ENCODE measurements at regions of chr7 and their contacts with region 1.

Region 1: GRCh38 chr7:131546583-131547111 is 9.8 kb downstream of the PODXL start:
- DNase-seq: peak; percentile 89 to 92
- H3K4me3 ChIP-seq: no peak overlapping the region
- H3K27ac ChIP-seq: no peak overlapping the region
- H3K4me1 ChIP-seq: peaks cover 39 to 86% (median 55%) of the 10 kb centered on the region in 4 experiments
- H3K27me3 ChIP-seq: no peaks in the 10 kb centered on the region
- CTCF ChIP-seq: peak; percentile 98 to 99 (median 98)
- EP300 ChIP-seq: no peak
- POLR2A ChIP-seq: no peak; a peak in 1 of 3 replicates
- RAD21 ChIP-seq: peak; percentile 73 to 79

Region 2: GRCh38 chr7:131507592-131508331 is 38.9 kb before region 1 on chr7:
- CTCF ChIA-PET with region 1: interaction called, 73 read pairs
- POLR2A ChIA-PET with region 1: interaction called, 4 read pairs
- DNase-seq: peak in 1 of 2 experiments; percentile 76
- H3K4me3 ChIP-seq: no peak overlapping the region
- H3K27ac ChIP-seq: peak overlapping the region; percentile 50; the same call in 1 of the 2 replicates
- H3K4me1 ChIP-seq: peaks cover 0 to 7% (median 3%) of the 10 kb centered on the region in 4 experiments; a peak in 4 of 7 replicates
- H3K27me3 ChIP-seq: no peaks in the 10 kb centered on the region
- CTCF ChIP-seq: peak; percentile 50 to 61 (median 60); a peak in 3 of 4 replicates
- EP300 ChIP-seq: no peak
- POLR2A ChIP-seq: peak; percentile 13 to 38; a peak in 2 of 3 replicates
- RAD21 ChIP-seq: peak; percentile 56 to 59

Region 3: DNA sequence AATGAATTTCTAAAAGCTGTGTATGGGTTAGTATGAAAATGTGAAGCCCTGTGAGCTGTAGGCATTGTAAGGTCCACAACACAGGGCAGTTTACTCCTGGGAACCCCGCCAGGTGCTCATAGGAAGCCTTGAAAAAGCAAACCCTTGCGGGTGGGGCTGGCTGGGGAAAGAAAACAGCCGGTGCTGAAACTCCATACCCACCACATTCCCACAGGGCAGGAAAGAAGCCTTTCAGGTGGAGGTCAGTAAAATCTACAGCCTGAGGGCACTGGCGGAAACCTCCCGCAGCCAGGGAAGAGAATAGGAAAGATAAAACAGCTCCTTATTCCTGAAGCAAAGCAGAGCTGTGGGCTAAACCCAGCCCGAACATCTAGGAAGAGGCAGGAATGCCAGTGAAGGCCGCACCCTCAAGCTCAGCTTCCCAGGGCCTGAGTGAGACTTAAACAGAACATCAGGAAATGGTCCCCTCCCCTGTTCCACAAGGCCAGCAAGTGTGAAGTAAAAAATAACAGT is 24.9 kb before region 1 on chr7:
- CTCF ChIA-PET with region 1: interaction called, 47 read pairs
- POLR2A ChIA-PET with region 1: interaction called, 5 read pairs
- DNase-seq: no peak
- H3K4me3 ChIP-seq: no peak overlapping the region
- H3K27ac ChIP-seq: no peak overlapping the region
- H3K4me1 ChIP-seq: peaks cover 5 to 31% (median 23%) of the 10 kb centered on the region in 4 experiments
- H3K27me3 ChIP-seq: no peaks in the 10 kb centered on the region
- CTCF ChIP-seq: no peak
- EP300 ChIP-seq: no peak
- POLR2A ChIP-seq: no peak
- RAD21 ChIP-seq: no peak

Region 4: DNA sequence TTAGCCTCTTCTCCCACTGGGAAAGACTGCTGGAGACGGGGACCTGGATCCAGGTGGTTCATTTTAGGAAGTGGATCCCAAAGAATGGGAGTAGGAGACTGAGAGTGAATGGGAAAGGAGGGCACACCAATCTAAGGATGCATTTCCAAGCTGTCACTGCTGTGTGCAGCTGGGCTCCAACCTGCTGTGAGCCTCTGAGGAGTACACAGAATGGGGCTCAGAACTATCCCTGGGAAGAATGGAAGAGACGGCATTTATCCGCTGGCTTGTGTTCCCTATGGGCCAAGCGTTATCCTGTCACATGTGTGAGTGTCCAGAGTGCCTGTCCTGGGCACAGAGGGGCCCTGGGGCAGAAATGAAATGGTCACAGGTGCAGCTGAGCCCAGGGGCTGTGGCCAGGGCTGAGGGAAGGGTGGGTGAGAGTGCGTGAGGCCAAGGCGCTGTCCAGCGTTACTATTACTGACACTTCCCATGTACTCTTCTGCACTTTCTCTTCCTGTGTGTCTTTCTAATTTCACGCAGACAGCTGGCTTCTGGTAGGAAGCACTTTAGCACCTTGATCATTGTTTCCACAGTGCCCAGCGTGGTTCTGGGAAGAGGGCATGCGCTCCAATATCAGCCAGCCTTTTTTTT is 45.2 kb after region 1 on chr7:
- CTCF ChIA-PET with region 1: interaction called, 16 read pairs
- POLR2A ChIA-PET with region 1: interaction called, 5 read pairs
- DNase-seq: no peak
- H3K4me3 ChIP-seq: no peak overlapping the region
- H3K27ac ChIP-seq: no peak overlapping the region
- H3K4me1 ChIP-seq: peaks cover 0 to 10% (median 3%) of the 10 kb centered on the region in 4 experiments; a peak in 5 of 7 replicates
- H3K27me3 ChIP-seq: 0 out of 7 replicates have a peak, but pooled peaks cover 0 to 3% (median 0%) of the 10 kb centered on the region in 4 experiments
- CTCF ChIP-seq: no peak
- EP300 ChIP-seq: no peak
- POLR2A ChIP-seq: no peak
- RAD21 ChIP-seq: no peak

Region 5: DNA sequence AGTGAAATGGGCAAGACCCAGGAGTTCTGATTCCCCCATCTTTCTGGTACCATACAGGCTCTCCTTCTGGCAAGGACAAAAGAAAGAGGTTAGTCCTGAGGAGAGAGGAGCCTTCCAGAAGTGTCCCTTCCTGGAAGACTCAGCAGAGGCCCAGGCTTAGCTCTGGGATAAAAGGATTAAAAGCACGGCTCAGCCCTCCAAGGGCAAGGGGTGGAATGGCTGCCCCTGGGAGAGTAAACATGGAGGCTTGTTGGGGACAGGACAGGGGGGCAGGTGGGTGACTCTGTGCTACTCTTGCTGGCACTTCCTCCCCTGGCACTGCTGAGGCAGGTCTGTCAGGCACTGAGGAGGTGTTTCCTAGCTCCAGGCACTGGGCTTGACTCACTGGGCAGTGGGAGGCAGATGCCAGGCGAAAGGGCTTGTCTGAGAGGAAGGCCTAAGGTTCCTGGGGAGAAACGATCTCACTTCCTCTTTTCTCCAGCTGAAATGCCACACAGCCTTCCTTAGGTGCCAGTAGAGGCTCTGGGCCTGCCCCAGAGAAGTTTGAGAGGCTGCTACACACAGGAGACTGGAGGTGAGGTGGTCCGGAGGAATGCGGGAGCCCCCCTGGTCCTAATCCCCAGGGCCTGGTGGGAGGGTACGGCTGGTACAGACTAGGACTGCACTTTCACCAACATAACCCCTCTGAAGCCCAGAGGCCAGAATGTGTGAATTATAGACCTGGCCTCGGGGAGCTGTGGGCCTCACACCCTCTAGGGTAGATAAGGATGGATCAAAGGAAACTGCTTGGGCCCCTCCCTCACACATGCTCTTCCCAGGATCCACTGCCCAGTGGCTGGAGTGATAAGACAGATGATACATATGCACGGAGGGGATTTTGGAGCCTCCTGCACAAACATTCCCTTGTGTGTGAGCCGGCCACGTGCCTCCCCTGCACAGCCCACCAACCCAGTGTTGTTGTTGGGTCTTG is 73.0 kb after region 1 on chr7:
- CTCF ChIA-PET with region 1: interaction called, 93 read pairs
- POLR2A ChIA-PET with region 1: no interaction called
- DNase-seq: no peak
- H3K4me3 ChIP-seq: no peak overlapping the region
- H3K27ac ChIP-seq: peak overlapping the region; percentile 25; the same call in 1 of the 2 replicates
- H3K4me1 ChIP-seq: peaks cover 4 to 24% (median 12%) of the 10 kb centered on the region in 4 experiments
- H3K27me3 ChIP-seq: no peaks in the 10 kb centered on the region
- CTCF ChIP-seq: no peak
- EP300 ChIP-seq: no peak
- POLR2A ChIP-seq: no peak
- RAD21 ChIP-seq: no peak

Region 6: GRCh38 chr7:131636092-131636491 is 89.4 kb after region 1 on chr7:
- CTCF ChIA-PET with region 1: interaction called, 93 read pairs
- POLR2A ChIA-PET with region 1: no interaction called
- DNase-seq: no peak
- H3K4me3 ChIP-seq: no peak overlapping the region
- H3K27ac ChIP-seq: no peak overlapping the region
- H3K4me1 ChIP-seq: peaks cover 0 to 15% (median 5%) of the 10 kb centered on the region in 4 experiments; a peak in 3 of 7 replicates
- H3K27me3 ChIP-seq: peaks cover 0 to 3% (median 0%) of the 10 kb centered on the region in 4 experiments; a peak in 1 of 7 replicates
- CTCF ChIP-seq: no peak
- EP300 ChIP-seq: no peak
- POLR2A ChIP-seq: no peak
- RAD21 ChIP-seq: no peak

Measured in H1 (cell line).